ENCODE measurements at regions of chr1 and their contacts with region 1.

Region 1: GRCh38 chr1:156643778-156644092 is 1.8 kb downstream of the BCAN start:
- DNase-seq: no peak
- H3K27ac ChIP-seq: no peak overlapping the region
- CTCF ChIP-seq: no peak

Region 2: GRCh38 chr1:156625436-156626078 is 18.2 kb before region 1 on chr1:
- CTCF ChIA-PET with region 1: interaction called, 13 read pairs
- POLR2A ChIA-PET with region 1: interaction called, 5 read pairs
- DNase-seq: no peak
- H3K27ac ChIP-seq: no peak overlapping the region
- CTCF ChIP-seq: peak; percentile 87

Region 3: DNA sequence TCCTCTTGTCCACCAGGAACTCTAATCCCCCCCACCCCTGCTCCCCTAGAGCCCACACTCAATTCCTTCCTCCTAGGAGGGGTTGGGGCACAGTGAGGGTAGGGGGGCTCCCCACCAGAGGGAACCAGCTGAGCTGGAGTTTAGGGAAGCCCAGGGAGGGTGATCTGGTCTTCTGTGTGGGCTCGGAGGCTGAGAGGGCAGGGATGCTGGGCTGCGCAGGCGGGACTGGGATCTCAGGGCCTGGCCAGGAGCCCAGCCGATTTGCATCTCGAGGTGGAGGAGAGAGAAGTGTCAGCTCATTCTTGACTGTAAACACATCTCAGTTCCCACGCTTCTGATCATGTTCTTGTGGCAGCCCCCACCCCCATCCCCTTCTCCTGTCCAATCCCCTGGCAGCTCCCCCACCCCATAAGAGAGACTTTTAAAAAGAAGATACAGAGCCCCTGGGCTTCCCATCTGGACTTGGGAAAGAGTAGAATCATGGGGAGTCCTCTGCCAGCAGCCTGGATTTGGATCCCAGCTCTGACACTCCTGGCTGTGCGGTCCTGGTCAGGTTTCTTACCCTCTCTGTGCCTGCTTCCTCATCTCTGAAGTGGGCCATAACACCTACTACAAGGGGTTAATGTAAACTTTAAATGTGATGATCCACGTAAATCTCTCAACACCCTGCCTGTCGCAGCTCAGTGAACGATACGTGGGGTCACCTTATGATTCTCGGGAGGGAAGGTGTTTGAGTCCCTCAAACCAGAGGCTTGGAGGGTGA is 256.4 kb after region 1 on chr1:
- CTCF ChIA-PET with region 1: no interaction called
- POLR2A ChIA-PET with region 1: no interaction called
- DNase-seq: no peak
- H3K27ac ChIP-seq: peak overlapping the region; percentile 99
- CTCF ChIP-seq: no peak

Measured in RWPE1 (cell line).